ENCODE measurements at regions of chr15 and their contacts with region 1.

Region 1: GRCh38 chr15:85296615-85297402 is 83.6 kb upstream of the AKAP13 start:
- DNase-seq: peak; percentile 86 to 90
- ATAC-seq: peak; percentile 98
- H3K4me3 ChIP-seq: no peak overlapping the region
- H3K27ac ChIP-seq: peak overlapping the region; percentile 53 to 60; a peak in 5 of 6 replicates
- H3K4me1 ChIP-seq: peaks cover 5% of the 10 kb centered on the region; the same call in 2 of the 3 replicates
- CTCF ChIP-seq: peak; percentile 98
- EP300 ChIP-seq: no peak
- POLR2A ChIP-seq: no peak
- RAD21 ChIP-seq: peak; percentile 97 to 99

Region 2: DNA sequence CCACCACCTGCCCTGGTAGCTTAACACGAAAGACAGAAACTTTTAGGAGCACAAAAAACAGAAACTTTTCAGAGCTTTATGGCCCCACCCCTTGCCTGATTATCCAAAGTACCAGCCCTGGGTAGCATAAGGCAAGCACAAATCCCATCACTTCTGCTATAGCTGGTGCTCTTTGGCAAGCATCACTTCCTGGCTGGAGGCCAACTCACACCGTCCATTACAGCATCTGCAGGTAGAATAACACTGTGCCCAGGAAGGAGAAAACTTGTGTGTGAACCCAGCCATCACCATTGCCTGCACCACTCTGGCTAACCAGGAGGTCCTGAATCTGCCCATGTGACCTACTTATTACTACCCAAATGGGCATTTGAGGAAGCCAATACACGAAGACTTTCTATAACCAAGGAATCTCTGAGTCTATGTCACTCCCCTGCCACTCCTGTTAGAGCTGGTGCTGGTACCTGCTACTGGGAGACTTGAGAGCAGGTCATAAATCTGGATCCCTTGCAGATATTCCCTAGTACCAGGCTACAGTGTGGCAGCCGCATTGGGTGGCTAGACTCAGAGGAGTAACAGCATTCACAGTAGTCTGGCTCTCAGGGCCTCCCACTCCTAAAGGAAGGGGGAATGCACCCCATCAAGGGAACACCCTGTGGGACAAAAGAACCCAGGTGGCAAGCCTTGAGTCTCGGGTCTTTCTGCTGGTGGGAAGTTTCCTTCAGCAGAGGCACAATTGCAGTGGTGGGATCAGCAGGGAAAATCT is 10.3 kb after region 1 on chr15:
- CTCF ChIA-PET with region 1: interaction called, 83 read pairs
- POLR2A ChIA-PET with region 1: no interaction called
- DNase-seq: no peak
- ATAC-seq: no peak; a peak in 2 of 6 replicates
- H3K4me3 ChIP-seq: no peak overlapping the region
- H3K27ac ChIP-seq: no peak overlapping the region
- H3K4me1 ChIP-seq: no peaks in the 10 kb centered on the region
- CTCF ChIP-seq: no peak
- EP300 ChIP-seq: no peak
- POLR2A ChIP-seq: no peak
- RAD21 ChIP-seq: no peak

Region 3: DNA sequence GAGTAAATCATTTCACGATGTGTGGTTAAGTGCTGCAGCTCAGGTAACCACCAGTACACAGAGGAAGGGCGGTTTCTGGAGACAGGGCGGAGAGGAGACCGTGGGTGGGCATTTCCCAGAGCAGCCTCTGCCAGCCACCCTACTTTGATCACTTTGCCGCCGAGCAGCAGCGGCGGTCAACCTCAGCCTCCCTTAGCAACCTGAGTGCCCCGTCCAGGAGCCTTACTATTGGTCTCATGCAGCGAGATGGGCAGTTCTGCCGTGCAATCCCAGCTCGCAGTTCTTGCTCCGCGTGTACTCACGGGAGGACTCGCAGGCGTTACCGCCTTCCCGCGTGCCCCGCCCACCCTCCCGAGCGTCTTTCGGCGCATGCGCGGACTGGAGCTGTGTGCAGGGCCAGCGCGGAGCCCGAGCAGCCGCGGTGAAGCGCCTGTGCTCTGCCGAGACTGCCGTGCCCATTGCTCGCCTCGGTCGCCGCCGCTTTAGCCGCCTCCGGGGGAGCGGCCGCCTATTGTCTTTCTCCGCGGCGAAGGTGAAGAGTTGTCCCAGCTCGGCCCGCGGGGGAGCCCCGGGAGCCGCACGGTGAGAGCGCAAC is 83.5 kb after region 1 on chr15 and contains the start of gene AKAP13:
- CTCF ChIA-PET with region 1: interaction called, 5 read pairs
- POLR2A ChIA-PET with region 1: interaction called, 11 read pairs
- DNase-seq: peak; percentile 99 to 100
- ATAC-seq: peak; percentile 94 to 96
- H3K4me3 ChIP-seq: peak within 1 kb of the TSS; percentile 91
- H3K27ac ChIP-seq: peak within 1 kb of the TSS; percentile 90 to 92
- H3K4me1 ChIP-seq: peaks cover 29% of the 10 kb centered on the region; the same call in 2 of the 3 replicates
- CTCF ChIP-seq: no peak
- EP300 ChIP-seq: no peak; a peak in 1 of 5 replicates
- POLR2A ChIP-seq: peak; percentile 84
- RAD21 ChIP-seq: no peak; a peak in 1 of 5 replicates
- polyA plus RNA-seq, gene AKAP13: 28.8 and 59.7 TPM in 2 replicates

Region 4: DNA sequence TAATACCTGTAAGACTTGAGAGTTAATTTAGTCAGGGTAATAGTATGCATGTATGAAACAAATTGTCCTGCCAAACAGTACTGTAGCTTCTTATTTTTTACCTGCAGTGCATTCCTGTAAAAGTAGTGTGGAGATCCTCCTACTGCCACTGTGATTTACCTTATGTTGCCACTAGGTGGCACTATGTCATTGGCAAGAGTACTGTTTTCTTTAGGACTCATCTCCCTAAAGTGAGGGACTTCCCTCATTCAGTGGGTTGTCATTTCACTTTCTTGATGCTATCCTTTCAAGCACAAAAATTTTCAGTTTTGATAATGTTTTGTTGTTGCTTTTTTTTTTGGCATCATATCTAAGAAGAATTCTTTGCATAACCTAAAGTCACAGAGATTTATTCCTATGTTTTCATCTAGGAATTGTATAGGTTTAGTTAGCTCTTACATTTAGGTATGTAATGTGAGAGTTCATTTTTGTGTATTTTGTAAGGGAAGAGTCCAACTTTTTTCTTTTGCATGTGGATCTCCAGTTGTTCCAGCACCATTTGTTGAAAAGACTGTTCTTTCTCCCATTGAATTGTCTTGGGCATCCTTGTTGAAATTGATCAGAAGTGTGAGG is 189.3 kb after region 1 on chr15:
- CTCF ChIA-PET with region 1: interaction called, 42 read pairs
- POLR2A ChIA-PET with region 1: no interaction called
- DNase-seq: peak; percentile 72 to 84
- ATAC-seq: peak; percentile 91 to 95
- H3K4me3 ChIP-seq: no peak overlapping the region
- H3K27ac ChIP-seq: no peak overlapping the region
- H3K4me1 ChIP-seq: peaks cover 20% of the 10 kb centered on the region; the same call in 2 of the 3 replicates
- CTCF ChIP-seq: peak; percentile 90
- EP300 ChIP-seq: no peak
- POLR2A ChIP-seq: no peak
- RAD21 ChIP-seq: peak; percentile 89 to 92

Region 5: GRCh38 chr15:85504749-85505676 is 208.2 kb after region 1 on chr15:
- CTCF ChIA-PET with region 1: interaction called, 84 read pairs
- POLR2A ChIA-PET with region 1: no interaction called
- DNase-seq: peak; percentile 49 to 74
- ATAC-seq: peak; percentile 83 to 89; a peak in 4 of 6 replicates
- H3K4me3 ChIP-seq: no peak overlapping the region
- H3K27ac ChIP-seq: peak overlapping the region in 1 of 2 experiments; percentile 6; a peak in 1 of 6 replicates
- H3K4me1 ChIP-seq: peaks cover 15% of the 10 kb centered on the region; the same call in 2 of the 3 replicates
- CTCF ChIP-seq: peak; percentile 93
- EP300 ChIP-seq: no peak
- POLR2A ChIP-seq: no peak
- RAD21 ChIP-seq: peak; percentile 69 to 74

Measured in A549 (cell line).